ENCODE measurements at regions of chr21 and their contacts with region 1.

Region 1: DNA sequence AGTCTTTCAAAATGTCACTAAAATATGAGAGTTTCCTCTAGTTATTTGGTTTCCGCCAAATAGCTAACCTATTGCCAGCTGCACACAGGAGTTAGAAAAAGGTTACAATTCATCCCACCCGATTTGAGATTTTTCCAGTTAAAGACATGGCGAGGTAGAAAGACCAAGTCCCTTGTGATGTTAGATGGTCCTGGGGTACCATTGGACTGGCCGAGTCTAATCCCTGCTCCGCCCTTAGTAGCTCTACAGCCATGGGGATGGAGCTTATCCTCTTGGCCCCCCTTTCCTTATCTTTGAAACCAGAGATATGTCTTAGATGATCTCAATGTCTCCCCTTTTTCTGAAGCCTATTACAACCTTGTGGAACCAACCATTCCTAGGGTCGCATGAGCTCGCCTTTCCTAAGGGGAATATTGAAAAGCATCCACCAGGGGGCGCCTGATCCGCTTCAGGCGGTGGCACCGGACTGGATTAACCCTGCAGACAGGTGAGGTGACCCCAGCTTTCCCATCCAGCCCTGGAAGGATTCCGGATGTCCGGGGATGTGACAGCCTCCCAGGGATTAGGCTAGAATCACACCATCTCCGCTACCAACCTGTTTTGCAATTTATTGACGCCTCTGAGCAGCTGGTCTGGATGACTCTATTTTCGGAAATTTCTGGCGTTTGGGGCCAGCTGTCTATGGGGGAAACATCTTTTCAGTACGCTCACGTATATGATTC is 68.3 kb upstream of the SIM2 start:
- DNase-seq: peak; percentile 32 to 58 (median 36)
- H3K4me3 ChIP-seq: no peak overlapping the region
- H3K4me3 Mint-ChIP-seq: no peak overlapping the region
- H3K27ac ChIP-seq: no peak overlapping the region
- H3K27ac Mint-ChIP-seq: no peak overlapping the region
- H3K4me1 ChIP-seq: no peaks in the 10 kb centered on the region
- H3K4me1 Mint-ChIP-seq: no peaks in the 10 kb centered on the region
- H3K27me3 ChIP-seq: no peaks in the 10 kb centered on the region
- H3K27me3 Mint-ChIP-seq: peaks cover 4 to 34% of the 10 kb centered on the region in 2 donors

Region 2: GRCh38 chr21:36640721-36641244 is 10.1 kb after region 1 on chr21:
- CTCF ChIA-PET with region 1: interaction called, 10 read pairs
- POLR2A ChIA-PET with region 1: no interaction called
- DNase-seq: no peak
- H3K4me3 ChIP-seq: no peak overlapping the region
- H3K4me3 Mint-ChIP-seq: no peak overlapping the region
- H3K27ac ChIP-seq: no peak overlapping the region
- H3K27ac Mint-ChIP-seq: no peak overlapping the region
- H3K4me1 ChIP-seq: no peaks in the 10 kb centered on the region
- H3K4me1 Mint-ChIP-seq: no peaks in the 10 kb centered on the region
- H3K27me3 ChIP-seq: no peaks in the 10 kb centered on the region
- H3K27me3 Mint-ChIP-seq: peaks cover 9 to 33% of the 10 kb centered on the region in 2 donors

Region 3: DNA sequence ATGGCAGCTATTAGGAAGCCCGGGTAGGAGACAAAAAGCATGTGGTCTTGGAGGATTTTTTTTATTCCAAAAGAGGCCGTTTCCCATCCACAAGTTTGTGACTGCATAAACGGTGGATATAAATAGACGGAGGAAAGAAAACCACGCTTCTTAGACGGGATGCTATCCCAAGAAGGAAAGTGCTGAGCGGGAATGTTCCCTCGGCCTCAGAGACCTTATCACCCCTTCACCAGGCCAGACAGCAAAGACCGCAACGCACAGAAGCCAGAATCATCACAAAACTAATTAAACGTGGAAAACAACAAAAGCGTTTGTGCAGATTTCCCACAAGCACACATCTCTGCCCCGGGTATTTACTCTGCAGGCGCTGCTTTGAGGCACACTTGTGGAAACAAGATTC is 292.6 kb after region 1 on chr21:
- CTCF ChIA-PET with region 1: interaction called, 11 read pairs
- POLR2A ChIA-PET with region 1: no interaction called
- DNase-seq: no peak
- H3K4me3 ChIP-seq: no peak overlapping the region
- H3K4me3 Mint-ChIP-seq: no peak overlapping the region
- H3K27ac ChIP-seq: no peak overlapping the region
- H3K27ac Mint-ChIP-seq: no peak overlapping the region
- H3K4me1 ChIP-seq: no peaks in the 10 kb centered on the region
- H3K4me1 Mint-ChIP-seq: no peaks in the 10 kb centered on the region
- H3K27me3 ChIP-seq: no peaks in the 10 kb centered on the region
- H3K27me3 Mint-ChIP-seq: peaks cover 0 to 2% of the 10 kb centered on the region in 2 donors

Measured in CD8-positive, alpha-beta memory T cell (primary cell).